ENCODE measurements at regions of chr22 and their contacts with region 1.

Region 1: DNA sequence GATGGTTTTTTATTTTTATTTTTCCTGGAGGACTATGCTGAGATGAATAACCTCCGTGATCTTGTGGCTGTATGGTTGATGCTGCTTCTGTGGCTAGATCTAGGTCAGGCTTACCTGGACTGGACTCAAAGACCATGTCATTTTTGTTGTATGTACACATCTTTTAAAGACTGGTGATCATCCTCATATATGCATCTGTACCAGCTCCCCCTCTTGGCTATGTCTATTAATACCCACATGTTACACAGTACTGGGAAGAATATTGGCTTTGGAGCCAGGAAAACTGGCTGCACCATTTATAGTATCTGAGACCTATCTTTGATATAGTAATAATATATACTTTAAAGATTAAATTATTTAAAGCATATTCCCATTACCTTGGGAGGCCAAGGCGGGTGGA is 18.4 kb upstream of the PITPNB start:
- DNase-seq: no peak
- ATAC-seq: no peak

Region 2: GRCh38 chr22:27748751-27749191 is 188.7 kb before region 1 on chr22:
- intact Hi-C with region 1: no loop called
- DNase-seq: peak; percentile 31
- ATAC-seq: peak; percentile 58 to 69

Region 3: GRCh38 chr22:27880778-27881394 is 56.6 kb before region 1 on chr22:
- intact Hi-C with region 1: loop called in 1 of 2 experiments (anchors 10 kb)
- DNase-seq: no peak
- ATAC-seq: peak; percentile 83 to 85

Region 4: GRCh38 chr22:27903805-27904473 is 33.5 kb before region 1 on chr22:
- intact Hi-C with region 1: no loop called
- DNase-seq: no peak
- ATAC-seq: no peak